T-cell (primary cell): ENCODE measurements at regions of chr4 and their contacts with region 1.

Region 1: DNA sequence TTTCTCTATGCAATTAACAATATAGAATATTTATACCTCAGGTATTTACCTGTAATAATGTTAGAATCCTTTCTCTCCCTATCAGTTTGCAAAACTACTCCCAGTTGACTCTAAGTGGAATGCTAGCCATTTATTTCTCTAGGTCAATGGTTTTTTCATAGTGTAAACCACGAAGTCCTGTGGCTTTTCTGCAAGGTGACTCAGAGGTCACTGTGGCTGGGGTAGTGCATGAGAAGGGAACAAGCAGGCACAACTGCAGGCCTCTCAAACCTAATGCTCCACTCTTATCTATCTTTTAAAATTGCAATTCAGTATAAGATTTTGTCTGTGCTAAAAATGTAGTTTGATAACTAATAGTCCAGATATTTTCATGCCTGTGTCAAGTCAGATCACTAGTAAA is 159.4 kb downstream of the ANTXR2 start:
- DNase-seq: no peak
- ATAC-seq: no peak
- H3K4me3 ChIP-seq: no peak overlapping the region
- H3K4me3 Mint-ChIP-seq: no peak overlapping the region
- H3K27ac ChIP-seq: no peak overlapping the region
- H3K27ac Mint-ChIP-seq: no peak overlapping the region
- H3K4me1 ChIP-seq: no peaks in the 10 kb centered on the region
- H3K4me1 Mint-ChIP-seq: peaks cover 6 to 22% (median 17%) of the 10 kb centered on the region in 3 donors
- H3K27me3 ChIP-seq: no peaks in the 10 kb centered on the region
- H3K27me3 Mint-ChIP-seq: no peaks in the 10 kb centered on the region

Region 2: GRCh38 chr4:79865201-79865597 is 48.4 kb before region 1 on chr4:
- CTCF ChIA-PET with region 1: no interaction called
- POLR2A ChIA-PET with region 1: no interaction called
- DNase-seq: no peak
- ATAC-seq: no peak
- H3K4me3 ChIP-seq: no peak overlapping the region
- H3K4me3 Mint-ChIP-seq: no peak overlapping the region
- H3K27ac ChIP-seq: no peak overlapping the region
- H3K27ac Mint-ChIP-seq: no peak overlapping the region
- H3K4me1 ChIP-seq: no peaks in the 10 kb centered on the region
- H3K4me1 Mint-ChIP-seq: no peaks in the 10 kb centered on the region
- H3K27me3 ChIP-seq: no peaks in the 10 kb centered on the region
- H3K27me3 Mint-ChIP-seq: peaks cover 3 to 5% of the 10 kb centered on the region in 2 donors

Region 3: DNA sequence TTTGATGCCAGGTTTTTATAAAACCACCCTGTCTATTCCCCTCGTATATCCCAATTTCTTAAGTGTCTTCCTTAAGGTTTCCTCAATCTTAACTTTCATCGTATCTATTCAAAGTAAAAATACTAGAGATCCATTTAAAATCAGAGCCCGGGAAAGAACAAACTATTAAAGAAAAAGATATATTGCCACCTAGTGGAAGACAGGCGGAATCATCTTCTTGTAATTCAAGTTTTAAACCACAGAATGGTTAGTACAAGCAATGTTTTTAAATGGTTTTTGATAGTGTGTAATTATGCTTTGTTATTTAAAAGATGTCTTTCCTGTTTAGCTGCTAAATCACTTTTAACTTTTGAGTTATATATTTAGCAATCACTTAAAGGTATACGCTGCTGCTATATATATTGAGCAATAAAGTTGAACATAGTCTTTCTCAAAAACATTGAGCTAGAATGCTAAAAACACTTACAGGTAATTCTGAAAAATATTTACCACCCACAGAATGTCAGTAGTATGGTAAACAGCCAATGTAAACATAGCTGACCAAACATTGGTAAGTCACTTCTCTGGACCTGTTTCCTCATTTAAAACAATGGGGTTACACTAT is 302.0 kb after region 1 on chr4:
- CTCF ChIA-PET with region 1: interaction called, 7 to 11 read pairs
- POLR2A ChIA-PET with region 1: interaction called in 1 of 2 experiments, 3 read pairs
- DNase-seq: peak in 1 of 35 experiments; percentile 55
- ATAC-seq: peak in 1 of 4 experiments; percentile 58
- H3K4me3 ChIP-seq: no peak overlapping the region
- H3K4me3 Mint-ChIP-seq: no peak overlapping the region
- H3K27ac ChIP-seq: no peak overlapping the region
- H3K27ac Mint-ChIP-seq: no peak overlapping the region
- H3K4me1 ChIP-seq: no peaks in the 10 kb centered on the region
- H3K4me1 Mint-ChIP-seq: peaks cover 0 to 2% (median 2%) of the 10 kb centered on the region in 3 donors
- H3K27me3 ChIP-seq: peaks cover 0 to 3% of the 10 kb centered on the region in 2 experiments
- H3K27me3 Mint-ChIP-seq: peaks cover 10 to 32% of the 10 kb centered on the region in 2 donors

Region 4: DNA sequence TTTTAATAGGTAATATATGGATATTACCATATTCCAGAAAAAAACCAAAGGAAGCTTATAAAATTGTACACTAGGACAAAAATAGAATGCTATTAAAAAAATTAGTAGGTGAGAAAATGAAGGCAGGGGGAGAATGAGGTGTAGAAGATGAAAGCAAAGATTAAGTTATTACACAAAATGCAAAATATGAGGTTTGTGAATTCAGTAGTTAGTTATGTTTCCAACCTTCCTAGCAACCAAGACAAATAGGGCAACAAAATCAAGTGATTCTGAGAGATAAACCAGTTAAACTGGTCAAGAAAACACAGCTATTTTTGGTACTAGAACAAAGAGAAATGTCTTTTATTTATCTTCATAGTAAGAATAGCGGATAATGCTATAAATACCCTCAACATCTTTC is 1858.1 kb after region 1 on chr4:
- CTCF ChIA-PET with region 1: no interaction called
- POLR2A ChIA-PET with region 1: no interaction called
- DNase-seq: no peak
- ATAC-seq: no peak
- H3K4me3 ChIP-seq: no peak overlapping the region
- H3K4me3 Mint-ChIP-seq: no peak overlapping the region
- H3K27ac ChIP-seq: no peak overlapping the region
- H3K27ac Mint-ChIP-seq: no peak overlapping the region
- H3K4me1 ChIP-seq: no peaks in the 10 kb centered on the region
- H3K4me1 Mint-ChIP-seq: no peaks in the 10 kb centered on the region
- H3K27me3 ChIP-seq: no peaks in the 10 kb centered on the region
- H3K27me3 Mint-ChIP-seq: peaks cover 0 to 3% of the 10 kb centered on the region in 2 donors